Ovary (tissue), 10 donors: ENCODE measurements at regions of chr9 and their contacts with region 1.

Region 1: GRCh38 chr9:34252670-34253459 is 74.0 kb downstream of the UBAP1 start:
- DNase-seq: peak; percentile 59 to 74 (median 68)
- H3K4me3 ChIP-seq: no peak overlapping the region
- H3K27ac ChIP-seq: peak overlapping the region; percentile 28 to 52
- H3K4me1 ChIP-seq: peaks cover 6% of the 10 kb centered on the region
- H3K27me3 ChIP-seq: no peaks in the 10 kb centered on the region
- CTCF ChIP-seq: peak; percentile 36 to 86 (median 56)
- EP300 ChIP-seq: no peak
- POLR2A ChIP-seq: no peak

Region 2: DNA sequence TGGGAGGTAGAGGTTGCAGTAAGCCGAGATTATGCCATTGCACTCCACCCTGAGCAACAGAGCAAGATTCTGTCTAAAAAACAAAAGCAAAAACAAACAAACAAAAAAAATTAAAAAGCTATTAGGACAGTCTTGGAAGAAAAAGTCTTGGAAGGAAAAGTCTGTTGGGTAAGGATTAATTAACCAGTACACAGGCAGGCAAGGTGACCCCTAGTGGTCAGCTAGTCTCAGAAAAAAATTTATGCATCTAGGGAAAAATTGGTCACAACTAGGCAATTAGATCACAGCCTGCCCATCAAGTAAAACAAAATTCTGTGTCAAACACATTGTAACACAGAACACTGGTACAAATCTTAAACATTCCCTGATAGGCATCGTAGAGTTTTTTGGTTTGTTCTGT is 735.5 kb before region 1 on chr9:
- intact Hi-C with region 1: no loop called
- DNase-seq: no peak
- H3K4me3 ChIP-seq: no peak overlapping the region
- H3K27ac ChIP-seq: no peak overlapping the region
- H3K4me1 ChIP-seq: no peaks in the 10 kb centered on the region
- H3K27me3 ChIP-seq: no peaks in the 10 kb centered on the region
- CTCF ChIP-seq: no peak
- EP300 ChIP-seq: no peak
- POLR2A ChIP-seq: no peak

Region 3: GRCh38 chr9:33816327-33817252 is 436.3 kb before region 1 on chr9 and contains the start of gene UBE2R2:
- intact Hi-C with region 1: loop called in 1 of 4 experiments (anchors 10 kb)
- DNase-seq: peak; percentile 87 to 93 (median 91)
- H3K4me3 ChIP-seq: peak within 1 kb of the TSS; percentile 94
- H3K27ac ChIP-seq: peak within 1 kb of the TSS; percentile 94 to 100
- H3K4me1 ChIP-seq: peaks cover 4% of the 10 kb centered on the region
- H3K27me3 ChIP-seq: no peaks in the 10 kb centered on the region
- CTCF ChIP-seq: peak in 1 of 3 donors; percentile 20
- EP300 ChIP-seq: no peak
- POLR2A ChIP-seq: peak; percentile 60
- total RNA-seq, gene UBE2R2: 19.6 to 50.1 (median 43.3) TPM

Region 4: DNA sequence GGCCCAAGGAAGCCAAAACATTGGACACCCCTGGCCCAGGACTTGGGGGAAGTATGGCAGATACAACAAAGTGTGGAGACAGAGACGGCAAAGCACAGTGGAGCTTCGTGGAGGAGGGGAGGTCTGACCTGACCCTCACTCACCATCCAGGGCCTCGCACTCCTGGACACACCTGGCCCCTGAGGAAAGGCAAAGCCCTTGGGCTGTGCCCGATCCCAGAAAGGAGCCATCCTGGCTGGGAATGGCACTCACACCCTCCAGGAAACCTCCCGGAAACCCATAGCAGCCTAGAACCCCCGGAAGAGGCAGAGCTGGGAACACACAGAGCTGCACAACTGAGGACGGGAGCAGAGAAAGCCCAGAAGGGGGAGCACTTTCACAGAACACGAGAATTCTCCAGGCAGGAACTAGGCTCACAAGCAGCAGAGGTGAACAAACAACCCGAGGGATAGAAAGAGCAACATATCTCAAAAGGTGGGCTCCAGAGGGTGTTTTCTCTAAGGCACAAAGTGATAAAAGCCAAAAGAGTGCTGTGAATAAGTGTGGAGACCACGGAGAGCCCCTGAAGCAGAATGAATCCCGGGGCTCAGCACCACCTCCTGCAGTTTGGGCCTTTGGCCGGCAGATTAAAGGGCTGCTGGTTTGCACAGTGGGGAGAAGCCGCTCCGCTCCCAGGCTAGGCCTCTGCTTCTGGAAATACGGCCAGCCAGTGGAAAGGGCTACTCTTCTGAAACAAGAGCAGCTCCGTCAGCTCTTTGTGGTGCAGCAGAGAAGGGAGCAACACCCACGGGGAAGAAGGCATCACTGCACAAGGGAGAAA is 327.7 kb before region 1 on chr9:
- intact Hi-C with region 1: loop called in 2 of 4 experiments (anchors 10 kb)
- DNase-seq: peak; percentile 51 to 62 (median 54)
- H3K4me3 ChIP-seq: no peak overlapping the region
- H3K27ac ChIP-seq: no peak overlapping the region
- H3K4me1 ChIP-seq: peaks cover 1% of the 10 kb centered on the region
- H3K27me3 ChIP-seq: no peaks in the 10 kb centered on the region
- CTCF ChIP-seq: peak; percentile 24 to 29 (median 29)
- EP300 ChIP-seq: no peak
- POLR2A ChIP-seq: no peak

Region 5: DNA sequence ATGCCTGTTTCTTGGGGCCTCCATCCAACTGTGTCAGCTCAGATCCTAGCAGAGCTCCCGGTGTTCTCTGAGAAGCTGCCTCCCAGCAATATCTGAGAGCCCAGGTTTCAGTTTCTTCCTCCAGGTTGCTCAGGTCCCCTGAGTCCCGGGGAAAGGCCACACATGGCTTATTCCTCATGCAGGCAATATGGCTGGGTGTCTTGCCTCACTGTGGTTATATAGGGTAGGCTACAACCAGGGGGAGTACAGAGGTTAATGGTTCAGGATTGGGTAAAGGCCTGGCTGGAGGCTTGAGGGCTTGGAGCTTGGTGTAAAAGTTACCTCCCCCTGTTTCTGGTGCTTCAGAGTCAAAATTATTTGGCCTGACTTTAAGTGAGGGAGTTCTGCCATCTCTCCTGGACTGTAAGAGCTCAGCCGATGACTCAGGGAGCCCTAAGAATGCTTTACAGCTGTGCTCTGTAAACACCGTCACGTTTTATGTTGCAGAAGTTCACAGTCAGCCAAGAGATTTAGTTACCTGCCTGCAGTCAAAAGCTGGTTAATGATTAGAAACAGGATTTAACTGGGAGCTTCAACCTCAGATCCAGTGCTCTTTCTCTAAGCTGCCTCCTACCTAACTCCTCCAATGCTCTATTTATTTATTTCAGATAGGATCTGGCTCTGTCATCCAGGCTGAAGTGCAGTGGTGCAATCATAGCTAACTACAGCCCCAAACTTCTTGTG is 179.8 kb before region 1 on chr9:
- intact Hi-C with region 1: loop called in 1 of 4 experiments (anchors 5 kb)
- DNase-seq: peak in 2 of 5 donors; percentile 28 to 33
- H3K4me3 ChIP-seq: no peak overlapping the region
- H3K27ac ChIP-seq: peak overlapping the region; percentile 14 to 36
- H3K4me1 ChIP-seq: peaks cover 5% of the 10 kb centered on the region
- H3K27me3 ChIP-seq: no peaks in the 10 kb centered on the region
- CTCF ChIP-seq: no peak
- EP300 ChIP-seq: no peak
- POLR2A ChIP-seq: no peak

Region 6: GRCh38 chr9:34126207-34127034 is 126.4 kb before region 1 on chr9 and contains the start of gene DCAF12:
- intact Hi-C with region 1: loop called in 1 of 4 experiments (anchors 5 kb)
- DNase-seq: peak; percentile 90 to 94 (median 92)
- H3K4me3 ChIP-seq: peak within 1 kb of the TSS; percentile 86
- H3K27ac ChIP-seq: peak within 1 kb of the TSS; percentile 74 to 81
- H3K4me1 ChIP-seq: peaks cover 10% of the 10 kb centered on the region
- H3K27me3 ChIP-seq: no peaks in the 10 kb centered on the region
- CTCF ChIP-seq: no peak
- EP300 ChIP-seq: no peak
- POLR2A ChIP-seq: peak; percentile 67
- total RNA-seq, gene DCAF12: 18.0 to 35.0 (median 24.8) TPM

Region 7: GRCh38 chr9:34163458-34163857 is 89.4 kb before region 1 on chr9:
- intact Hi-C with region 1: no loop called
- DNase-seq: no peak
- H3K4me3 ChIP-seq: no peak overlapping the region
- H3K27ac ChIP-seq: no peak overlapping the region
- H3K4me1 ChIP-seq: no peaks in the 10 kb centered on the region
- H3K27me3 ChIP-seq: no peaks in the 10 kb centered on the region
- CTCF ChIP-seq: no peak
- EP300 ChIP-seq: no peak
- POLR2A ChIP-seq: no peak

Region 8: DNA sequence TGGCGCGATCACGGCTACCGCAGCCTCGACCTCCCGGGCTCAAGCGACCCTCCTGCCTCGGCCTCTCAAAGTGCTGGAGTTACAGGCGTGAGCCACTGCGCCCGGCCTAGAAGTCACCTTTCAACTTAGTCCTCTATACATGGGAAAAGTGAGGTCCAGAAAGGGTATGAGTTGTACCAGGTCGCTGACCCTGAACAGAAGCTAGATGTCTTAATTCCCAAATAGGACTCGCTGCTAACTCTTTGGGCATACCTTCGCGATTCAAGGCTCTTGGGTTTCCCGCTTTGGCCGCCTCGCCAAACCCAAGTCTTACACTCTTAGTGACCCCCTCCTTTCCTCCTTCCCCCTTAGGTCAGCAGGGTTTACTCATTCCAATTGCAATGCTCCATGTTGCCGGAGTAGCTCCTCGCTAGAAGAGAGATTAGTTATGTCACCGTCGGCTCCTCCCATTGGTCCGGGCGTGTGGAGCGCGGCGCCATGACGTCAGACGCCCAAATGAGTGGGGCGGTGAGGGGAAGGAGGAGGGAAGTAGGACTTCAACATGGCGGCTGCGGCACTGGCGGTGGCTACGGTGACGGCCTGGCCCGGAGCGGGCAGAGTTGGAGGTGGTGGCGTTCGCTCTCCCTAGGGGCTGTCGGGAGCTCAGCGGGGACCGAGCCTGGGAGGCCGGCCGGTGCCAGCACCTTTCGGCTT is 74.2 kb before region 1 on chr9 and contains the start of gene UBAP1:
- intact Hi-C with region 1: loop called in 1 of 4 experiments (anchors 5 kb)
- DNase-seq: peak; percentile 96 to 98 (median 97)
- H3K4me3 ChIP-seq: peak within 1 kb of the TSS; percentile 75
- H3K27ac ChIP-seq: peak within 1 kb of the TSS; percentile 88 to 98
- H3K4me1 ChIP-seq: peaks cover 3% of the 10 kb centered on the region
- H3K27me3 ChIP-seq: no peaks in the 10 kb centered on the region
- CTCF ChIP-seq: peak in 1 of 3 donors; percentile 6
- EP300 ChIP-seq: no peak
- POLR2A ChIP-seq: peak; percentile 96
- total RNA-seq, gene UBAP1: 25.8 to 52.8 (median 44.8) TPM

Region 9: DNA sequence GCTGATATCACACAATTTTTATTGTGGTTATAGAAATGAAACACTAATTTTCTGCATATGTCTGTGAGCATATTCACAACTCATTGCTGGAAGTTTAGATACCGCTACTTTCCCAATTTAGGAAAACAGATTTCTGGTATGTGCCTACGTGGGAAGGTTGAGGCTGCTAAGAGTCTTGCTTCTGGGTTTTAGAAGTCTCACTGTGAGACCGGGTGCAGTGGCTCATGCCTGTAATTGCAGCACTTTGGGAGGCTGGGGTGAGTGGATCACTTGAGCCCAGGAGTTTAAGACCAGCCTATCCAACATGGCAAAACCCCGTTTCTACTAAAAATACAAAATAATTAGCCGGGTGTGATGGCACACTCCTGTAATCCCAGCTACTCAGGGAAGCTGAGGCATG is 34.4 kb before region 1 on chr9:
- intact Hi-C with region 1: no loop called
- DNase-seq: no peak
- H3K4me3 ChIP-seq: no peak overlapping the region
- H3K27ac ChIP-seq: no peak overlapping the region
- H3K4me1 ChIP-seq: peaks cover 12% of the 10 kb centered on the region
- H3K27me3 ChIP-seq: no peaks in the 10 kb centered on the region
- CTCF ChIP-seq: no peak
- EP300 ChIP-seq: no peak
- POLR2A ChIP-seq: no peak